Caco-2 (cell line): ENCODE measurements at regions of chr2 and their contacts with region 1.

Region 1: GRCh38 chr2:75241696-75242095 is 42.4 kb upstream of the TACR1 start:
- DNase-seq: no peak
- H3K4me3 ChIP-seq: no peak overlapping the region
- H3K4me3 Mint-ChIP-seq: no peak overlapping the region
- H3K27ac Mint-ChIP-seq: no peak overlapping the region
- H3K4me1 ChIP-seq: no peaks in the 10 kb centered on the region
- H3K4me1 Mint-ChIP-seq: no peaks in the 10 kb centered on the region
- H3K27me3 ChIP-seq: no peaks in the 10 kb centered on the region
- H3K27me3 Mint-ChIP-seq: peaks cover 2% of the 10 kb centered on the region
- CTCF ChIP-seq: peak in 1 of 2 experiments; percentile 5

Region 2: GRCh38 chr2:74845217-74846011 is 396.3 kb before region 1 on chr2:
- CTCF ChIA-PET with region 1: no interaction called
- POLR2A ChIA-PET with region 1: no interaction called
- intact Hi-C with region 1: no loop called
- DNase-seq: peak; percentile 66 to 67
- H3K4me3 ChIP-seq: no peak overlapping the region
- H3K4me3 Mint-ChIP-seq: peak overlapping the region; percentile 17
- H3K27ac Mint-ChIP-seq: peak overlapping the region; percentile 68
- H3K4me1 ChIP-seq: peaks cover 68% of the 10 kb centered on the region
- H3K4me1 Mint-ChIP-seq: peaks cover 53% of the 10 kb centered on the region
- H3K27me3 ChIP-seq: no peaks in the 10 kb centered on the region
- H3K27me3 Mint-ChIP-seq: no peaks in the 10 kb centered on the region
- CTCF ChIP-seq: no peak

Region 3: DNA sequence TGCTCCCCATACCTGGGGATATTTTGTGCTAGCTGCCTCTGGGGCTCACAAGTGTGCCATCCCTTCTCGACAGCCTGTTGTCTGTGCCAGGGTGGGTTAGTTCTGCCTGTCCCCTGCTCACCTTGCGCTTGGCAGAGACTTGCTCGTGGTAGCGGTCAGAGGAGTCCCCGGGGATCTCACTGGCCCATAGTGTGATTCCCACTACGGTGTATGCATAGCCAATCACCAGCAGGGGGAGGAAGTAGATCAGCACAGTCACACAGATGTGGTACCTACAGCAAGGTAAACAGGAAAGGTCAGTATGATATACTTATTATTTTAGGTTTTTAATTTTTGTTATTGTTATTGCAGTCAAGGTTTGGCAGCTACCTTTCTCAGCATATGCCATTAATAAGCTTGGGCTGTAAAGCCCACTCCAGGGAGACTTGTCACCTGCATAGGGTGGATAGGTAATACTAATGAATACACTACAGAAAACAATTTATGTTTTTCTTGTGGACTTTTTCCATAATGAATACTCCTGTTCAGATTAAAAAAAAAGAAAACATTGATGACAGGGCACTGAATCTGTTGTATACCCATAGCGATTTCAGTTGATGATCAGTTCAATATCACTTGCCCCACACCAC is 188.1 kb before region 1 on chr2:
- CTCF ChIA-PET with region 1: no interaction called
- POLR2A ChIA-PET with region 1: no interaction called
- intact Hi-C with region 1: loop called (anchors 5 kb)
- DNase-seq: peak; percentile 55 to 60
- H3K4me3 ChIP-seq: no peak overlapping the region
- H3K4me3 Mint-ChIP-seq: no peak overlapping the region
- H3K27ac Mint-ChIP-seq: no peak overlapping the region
- H3K4me1 ChIP-seq: no peaks in the 10 kb centered on the region
- H3K4me1 Mint-ChIP-seq: no peaks in the 10 kb centered on the region
- H3K27me3 ChIP-seq: no peaks in the 10 kb centered on the region
- H3K27me3 Mint-ChIP-seq: no peaks in the 10 kb centered on the region
- CTCF ChIP-seq: peak; percentile 73 to 89

Region 4: GRCh38 chr2:75211266-75211770 is 30.4 kb before region 1 on chr2:
- CTCF ChIA-PET with region 1: no interaction called
- POLR2A ChIA-PET with region 1: no interaction called
- intact Hi-C with region 1: no loop called
- DNase-seq: no peak
- H3K4me3 ChIP-seq: no peak overlapping the region
- H3K4me3 Mint-ChIP-seq: no peak overlapping the region
- H3K27ac Mint-ChIP-seq: no peak overlapping the region
- H3K4me1 ChIP-seq: no peaks in the 10 kb centered on the region
- H3K4me1 Mint-ChIP-seq: no peaks in the 10 kb centered on the region
- H3K27me3 ChIP-seq: no peaks in the 10 kb centered on the region
- H3K27me3 Mint-ChIP-seq: peaks cover 13% of the 10 kb centered on the region
- CTCF ChIP-seq: no peak